ENCODE measurements at regions of chr21 and their contacts with region 1.

Region 1: GRCh38 chr21:31945546-31945945 is 72.7 kb downstream of the HUNK start:
- DNase-seq: no peak

Region 2: GRCh38 chr21:31580866-31581276 is 364.7 kb before region 1 on chr21:
- intact Hi-C with region 1: no loop called
- DNase-seq: no peak

Region 3: DNA sequence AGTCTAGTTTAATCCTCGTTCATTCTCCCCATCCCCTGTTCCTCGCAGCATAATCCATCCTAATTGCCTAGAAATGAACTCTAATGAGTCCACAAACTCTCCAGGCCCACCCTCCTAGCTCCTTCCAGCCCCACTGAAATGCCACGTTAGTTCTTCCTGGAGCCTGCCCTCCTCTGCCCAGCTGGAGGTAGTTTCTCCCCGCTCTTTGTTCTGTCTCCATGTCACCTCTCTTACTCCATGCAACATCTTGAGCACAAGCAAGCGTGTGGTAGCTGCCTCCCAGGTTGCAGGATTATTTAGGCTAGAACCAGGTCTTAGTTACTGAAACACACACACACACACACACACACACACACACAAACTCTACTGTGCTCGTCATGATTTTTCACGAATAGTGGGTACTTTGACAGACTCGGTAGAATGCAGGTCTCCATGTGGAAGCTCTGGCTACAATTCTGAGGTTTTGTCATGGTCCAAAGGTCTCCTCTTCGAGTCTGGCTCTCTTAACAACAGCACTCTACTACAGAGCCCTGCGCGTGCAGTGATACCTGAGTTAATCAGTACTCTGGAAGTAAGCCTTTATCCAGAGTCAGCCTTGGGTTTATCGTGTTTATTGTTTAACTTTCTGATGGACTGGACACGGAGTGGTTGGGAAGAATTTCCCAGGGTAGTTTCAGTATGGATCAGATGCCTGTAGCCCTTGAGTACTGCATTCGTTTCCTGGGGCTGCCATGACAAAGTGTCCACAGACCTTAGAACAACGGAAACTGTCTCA is 45.2 kb before region 1 on chr21:
- intact Hi-C with region 1: no loop called
- DNase-seq: no peak

Region 4: GRCh38 chr21:31974454-31974985 is 29.0 kb after region 1 on chr21:
- intact Hi-C with region 1: no loop called
- DNase-seq: peak; percentile 26

Region 5: GRCh38 chr21:32520875-32521735 is 575.6 kb after region 1 on chr21:
- intact Hi-C with region 1: no loop called
- DNase-seq: peak; percentile 95

Region 6: GRCh38 chr21:32638785-32639184 is 693.2 kb after region 1 on chr21:
- intact Hi-C with region 1: loop called in 1 of 2 experiments (anchors 10 kb)
- DNase-seq: no peak

Measured in posterior vena cava (tissue), 2 donors.